Right lobe of liver (tissue), 6 donors: ENCODE measurements at regions of chr1 and their contacts with region 1.

Region 1: DNA sequence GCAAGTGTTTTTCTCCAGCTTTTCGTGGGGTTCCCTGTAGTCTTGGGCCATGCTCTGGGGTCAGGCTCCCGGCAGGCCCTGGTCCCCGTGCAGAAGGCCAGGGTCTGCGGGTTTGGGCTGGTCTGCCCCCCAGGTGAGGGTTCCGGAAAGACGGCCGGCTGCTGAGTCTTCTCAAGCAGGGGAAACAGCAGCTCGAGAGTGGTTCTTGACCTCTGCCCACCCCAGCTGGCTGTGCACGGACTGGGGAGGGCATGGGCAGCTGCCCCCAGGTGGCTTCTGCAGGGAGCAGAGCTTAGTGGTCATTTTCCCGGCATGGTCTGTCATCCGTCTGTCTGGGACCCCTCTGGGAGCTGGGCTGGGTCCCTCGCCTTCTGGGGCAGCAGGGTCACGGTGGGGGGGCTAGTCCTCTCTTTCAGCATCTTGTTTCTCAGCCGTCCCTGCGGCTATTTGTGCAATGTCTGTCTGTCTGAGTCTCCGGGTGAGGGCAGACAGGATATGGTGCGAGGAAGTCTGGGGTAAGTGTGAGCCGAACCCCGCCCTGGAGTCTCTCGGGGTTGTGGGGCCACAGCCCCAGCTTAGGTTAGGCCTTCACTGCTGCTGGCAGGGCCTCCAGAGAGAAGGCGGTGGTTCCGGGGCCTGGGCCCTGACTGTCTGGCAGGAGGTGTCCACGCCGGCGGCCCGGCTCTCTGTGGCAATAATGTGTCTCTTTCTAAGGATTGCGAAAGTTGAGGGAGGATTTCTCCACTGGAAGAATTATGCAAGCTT is 6.1 kb downstream of the SKI start:
- DNase-seq: peak; percentile 92 to 96 (median 95)
- ATAC-seq: peak; percentile 60 to 68 (median 64)
- H3K4me3 ChIP-seq: peak overlapping the region in 2 of 3 donors; percentile 30 to 67
- H3K27ac ChIP-seq: peak overlapping the region; percentile 68 to 93 (median 68)
- H3K4me1 ChIP-seq: peaks cover 0 to 83% (median 49%) of the 10 kb centered on the region in 4 donors
- H3K27me3 ChIP-seq: no peaks in the 10 kb centered on the region
- CTCF ChIP-seq: no peak
- POLR2A ChIP-seq: peak; percentile 76

Region 2: DNA sequence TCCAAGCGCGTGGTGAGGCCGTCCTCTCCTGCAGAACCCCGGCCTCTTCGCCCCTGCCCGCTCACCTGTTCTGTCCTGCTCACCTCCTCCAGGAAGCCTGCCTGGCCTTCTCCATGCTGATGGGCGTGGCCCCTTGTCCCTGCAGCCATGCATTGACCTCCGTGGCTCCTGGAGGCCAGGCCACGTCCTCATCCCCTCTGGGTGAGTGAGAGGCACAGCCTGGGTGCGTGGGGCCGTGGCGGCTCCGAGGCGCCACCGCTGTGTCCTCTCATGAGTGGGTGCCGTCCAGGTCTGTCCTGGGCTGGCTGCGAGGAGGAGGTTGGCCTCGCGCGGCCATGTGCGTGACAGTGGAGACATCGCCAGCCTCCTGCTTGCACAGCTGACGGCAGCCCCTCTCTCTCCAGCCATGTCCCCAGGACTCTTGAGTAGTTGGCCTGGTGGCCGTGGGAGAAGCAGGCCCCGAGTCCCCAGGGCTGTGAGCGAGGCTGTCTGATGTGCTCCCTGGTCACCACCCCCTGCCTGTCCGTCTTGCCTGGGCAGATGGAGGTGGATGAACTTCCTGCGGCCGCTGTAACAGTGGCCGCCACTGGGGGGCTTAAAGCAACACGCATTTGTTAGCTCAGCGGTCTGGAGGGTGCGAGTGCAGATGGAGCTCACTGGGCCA is 125.8 kb before region 1 on chr1:
- intact Hi-C with region 1: no loop called
- DNase-seq: peak in 1 of 3 donors; percentile 46
- ATAC-seq: no peak
- H3K4me3 ChIP-seq: no peak overlapping the region
- H3K27ac ChIP-seq: no peak overlapping the region
- H3K4me1 ChIP-seq: peaks cover 0 to 8% (median 0%) of the 10 kb centered on the region in 4 donors
- H3K27me3 ChIP-seq: no peaks in the 10 kb centered on the region
- CTCF ChIP-seq: peak in 2 of 4 donors; percentile 11 to 16
- POLR2A ChIP-seq: no peak

Region 3: GRCh38 chr1:2300851-2301606 is 66.8 kb after region 1 on chr1:
- intact Hi-C with region 1: loop called in 1 of 2 experiments (anchors 10 kb)
- DNase-seq: peak in 2 of 3 donors; percentile 78
- ATAC-seq: peak; percentile 28 to 54 (median 44)
- H3K4me3 ChIP-seq: peak overlapping the region in 1 of 3 donors; percentile 9
- H3K27ac ChIP-seq: peak overlapping the region; percentile 40 to 76 (median 55)
- H3K4me1 ChIP-seq: peaks cover 0 to 23% (median 9%) of the 10 kb centered on the region in 4 donors
- H3K27me3 ChIP-seq: no peaks in the 10 kb centered on the region
- CTCF ChIP-seq: no peak
- POLR2A ChIP-seq: peak; percentile 43